ENCODE measurements at regions of chr3 and their contacts with region 1.

Region 1: DNA sequence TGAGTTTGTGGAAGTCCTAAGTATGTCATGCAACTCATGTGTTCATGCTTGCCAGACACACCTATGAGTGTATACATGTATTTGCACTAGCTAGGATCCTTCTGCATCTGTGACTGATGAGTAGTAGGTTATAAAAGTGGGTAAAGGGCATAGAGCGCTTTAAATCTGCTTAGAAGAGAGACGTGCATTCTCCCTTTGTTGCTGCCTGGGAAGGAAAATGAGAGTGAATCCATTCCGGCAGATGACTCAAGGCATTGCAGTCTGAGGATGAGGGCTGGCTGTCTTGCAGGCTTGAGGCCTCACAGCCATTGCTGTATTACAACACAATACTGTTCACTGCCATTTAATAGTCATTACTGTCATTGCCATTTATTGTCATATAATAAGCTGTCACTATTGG is 120.8 kb upstream of the UMPS start:
- DNase-seq: no peak
- ATAC-seq: no peak
- H3K4me3 ChIP-seq: no peak overlapping the region
- H3K27ac ChIP-seq: no peak overlapping the region
- H3K4me1 ChIP-seq: peaks cover 74% of the 10 kb centered on the region
- H3K27me3 ChIP-seq: no peaks in the 10 kb centered on the region; a peak in 1 of 5 replicates
- CTCF ChIP-seq: no peak
- EP300 ChIP-seq: no peak
- POLR2A ChIP-seq: no peak
- RAD21 ChIP-seq: no peak

Region 2: GRCh38 chr3:124620600-124621063 is 11.2 kb after region 1 on chr3:
- CTCF ChIA-PET with region 1: no interaction called
- POLR2A ChIA-PET with region 1: interaction called, 18 read pairs
- in situ Hi-C with region 1: no loop called
- intact Hi-C with region 1: no loop called
- DNase-seq: peak; percentile 96
- ATAC-seq: peak; percentile 97
- H3K4me3 ChIP-seq: peak overlapping the region; percentile 28 to 48 (median 31); a peak in 4 of 6 replicates
- H3K27ac ChIP-seq: peak overlapping the region; percentile 95
- H3K4me1 ChIP-seq: peaks cover 83% of the 10 kb centered on the region
- H3K27me3 ChIP-seq: no peaks in the 10 kb centered on the region
- CTCF ChIP-seq: no peak
- EP300 ChIP-seq: peak; percentile 32 to 97; a peak in 3 of 4 replicates
- POLR2A ChIP-seq: peak in 1 of 2 experiments; percentile 59; a peak in 2 of 4 replicates
- RAD21 ChIP-seq: 0 out of 2 replicates have a peak, but pooled peaks have one; percentile 23

Region 3: GRCh38 chr3:124669470-124669869 is 60.1 kb after region 1 on chr3:
- CTCF ChIA-PET with region 1: no interaction called
- POLR2A ChIA-PET with region 1: no interaction called
- in situ Hi-C with region 1: no loop called
- intact Hi-C with region 1: no loop called
- DNase-seq: no peak
- ATAC-seq: no peak
- H3K4me3 ChIP-seq: no peak overlapping the region
- H3K27ac ChIP-seq: no peak overlapping the region
- H3K4me1 ChIP-seq: peaks cover 8% of the 10 kb centered on the region
- H3K27me3 ChIP-seq: no peaks in the 10 kb centered on the region
- CTCF ChIP-seq: no peak
- EP300 ChIP-seq: no peak
- POLR2A ChIP-seq: no peak
- RAD21 ChIP-seq: no peak

Region 4: DNA sequence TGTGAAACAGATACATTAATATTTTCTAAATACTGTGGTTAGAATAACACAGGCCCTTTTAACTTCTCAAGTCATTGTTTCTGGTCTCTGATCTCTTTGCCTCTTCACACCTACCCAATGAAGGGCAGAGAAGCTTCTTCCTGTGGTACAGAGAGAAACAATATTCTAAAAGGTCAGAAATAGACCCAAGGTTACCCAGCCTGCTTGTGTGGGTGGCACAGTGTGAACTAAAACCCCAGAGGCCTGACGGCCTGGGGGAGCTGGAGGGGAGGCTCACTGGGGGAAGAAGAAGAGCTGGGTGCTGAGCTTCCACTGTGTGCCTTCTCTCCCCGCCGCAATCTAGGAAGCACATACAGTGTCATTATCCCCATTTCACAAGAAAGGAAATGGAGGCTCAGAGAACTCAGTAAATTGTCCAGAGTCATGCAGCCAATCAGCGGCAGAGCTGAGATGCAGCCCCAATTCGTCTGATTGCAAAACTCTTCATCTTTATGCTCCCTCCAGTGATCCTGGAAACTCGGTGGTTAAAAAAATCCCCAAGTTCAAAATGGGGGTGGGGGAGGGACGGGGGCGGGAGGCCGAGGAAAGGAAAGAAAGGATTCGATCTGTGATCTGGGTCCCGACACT is 510.5 kb after region 1 on chr3:
- CTCF ChIA-PET with region 1: no interaction called
- POLR2A ChIA-PET with region 1: no interaction called
- in situ Hi-C with region 1: no loop called
- intact Hi-C with region 1: no loop called
- DNase-seq: no peak
- ATAC-seq: no peak
- H3K4me3 ChIP-seq: no peak overlapping the region
- H3K27ac ChIP-seq: no peak overlapping the region
- H3K4me1 ChIP-seq: peaks cover 18% of the 10 kb centered on the region
- H3K27me3 ChIP-seq: peaks cover 2 to 39% of the 10 kb centered on the region in 2 experiments; a peak in 3 of 5 replicates
- CTCF ChIP-seq: no peak
- EP300 ChIP-seq: no peak
- POLR2A ChIP-seq: no peak
- RAD21 ChIP-seq: no peak